Activated B cell treated with CpG ODN at 0.5 μM for 24 hours (primary cell): ENCODE measurements at regions of chr1 and their contacts with region 1.

Region 1: GRCh38 chr1:117895482-117896114 is 33.8 kb downstream of the GDAP2 start:
- DNase-seq: no peak
- ATAC-seq: peak; percentile 68
- H3K4me3 Mint-ChIP-seq: no peak overlapping the region
- H3K27ac Mint-ChIP-seq: no peak overlapping the region
- H3K4me1 Mint-ChIP-seq: no peaks in the 10 kb centered on the region
- H3K27me3 Mint-ChIP-seq: no peaks in the 10 kb centered on the region
- CTCF ChIP-seq: peak; percentile 34

Region 2: GRCh38 chr1:117067533-117068370 is 827.8 kb before region 1 on chr1:
- CTCF ChIA-PET with region 1: interaction called, 17 read pairs
- POLR2A ChIA-PET with region 1: no interaction called
- intact Hi-C with region 1: no loop called
- DNase-seq: no peak
- ATAC-seq: peak; percentile 85
- H3K4me3 Mint-ChIP-seq: no peak overlapping the region
- H3K27ac Mint-ChIP-seq: no peak overlapping the region
- H3K4me1 Mint-ChIP-seq: peaks cover 3% of the 10 kb centered on the region
- H3K27me3 Mint-ChIP-seq: no peaks in the 10 kb centered on the region
- CTCF ChIP-seq: no peak

Region 3: GRCh38 chr1:117121776-117122697 is 773.6 kb before region 1 on chr1:
- CTCF ChIA-PET with region 1: interaction called, 3 read pairs
- POLR2A ChIA-PET with region 1: no interaction called
- intact Hi-C with region 1: loop called (anchors 5 kb)
- DNase-seq: peak; percentile 76
- ATAC-seq: peak; percentile 88
- H3K4me3 Mint-ChIP-seq: peak overlapping the region; percentile 88
- H3K27ac Mint-ChIP-seq: peak overlapping the region; percentile 54
- H3K4me1 Mint-ChIP-seq: peaks cover 13% of the 10 kb centered on the region
- H3K27me3 Mint-ChIP-seq: peaks cover 2% of the 10 kb centered on the region
- CTCF ChIP-seq: no peak

Region 4: GRCh38 chr1:117512743-117513321 is 382.8 kb before region 1 on chr1:
- CTCF ChIA-PET with region 1: interaction called, 21 read pairs
- POLR2A ChIA-PET with region 1: no interaction called
- intact Hi-C with region 1: loop called (anchors 1 kb)
- DNase-seq: no peak
- ATAC-seq: no peak
- H3K4me3 Mint-ChIP-seq: no peak overlapping the region
- H3K27ac Mint-ChIP-seq: no peak overlapping the region
- H3K4me1 Mint-ChIP-seq: peaks cover 4% of the 10 kb centered on the region
- H3K27me3 Mint-ChIP-seq: no peaks in the 10 kb centered on the region
- CTCF ChIP-seq: no peak